ENCODE measurements at regions of chr16 and their contacts with region 1.

Region 1: GRCh38 chr16:81932668-81933067 is 78.6 kb downstream of the SDR42E1 start:
- DNase-seq: no peak
- ATAC-seq: no peak
- H3K4me3 ChIP-seq: no peak overlapping the region
- H3K27ac ChIP-seq: no peak overlapping the region
- H3K4me1 ChIP-seq: peaks cover 5 to 10% of the 10 kb centered on the region in 2 experiments; a peak in 3 of 5 replicates
- H3K27me3 ChIP-seq: peaks cover 15 to 32% of the 10 kb centered on the region in 2 experiments; a peak in 4 of 5 replicates
- CTCF ChIP-seq: 0 out of 6 replicates have a peak, but pooled peaks of 1 of the 3 experiments have one; percentile 17
- EP300 ChIP-seq: no peak
- POLR2A ChIP-seq: no peak
- RAD21 ChIP-seq: no peak

Region 2: DNA sequence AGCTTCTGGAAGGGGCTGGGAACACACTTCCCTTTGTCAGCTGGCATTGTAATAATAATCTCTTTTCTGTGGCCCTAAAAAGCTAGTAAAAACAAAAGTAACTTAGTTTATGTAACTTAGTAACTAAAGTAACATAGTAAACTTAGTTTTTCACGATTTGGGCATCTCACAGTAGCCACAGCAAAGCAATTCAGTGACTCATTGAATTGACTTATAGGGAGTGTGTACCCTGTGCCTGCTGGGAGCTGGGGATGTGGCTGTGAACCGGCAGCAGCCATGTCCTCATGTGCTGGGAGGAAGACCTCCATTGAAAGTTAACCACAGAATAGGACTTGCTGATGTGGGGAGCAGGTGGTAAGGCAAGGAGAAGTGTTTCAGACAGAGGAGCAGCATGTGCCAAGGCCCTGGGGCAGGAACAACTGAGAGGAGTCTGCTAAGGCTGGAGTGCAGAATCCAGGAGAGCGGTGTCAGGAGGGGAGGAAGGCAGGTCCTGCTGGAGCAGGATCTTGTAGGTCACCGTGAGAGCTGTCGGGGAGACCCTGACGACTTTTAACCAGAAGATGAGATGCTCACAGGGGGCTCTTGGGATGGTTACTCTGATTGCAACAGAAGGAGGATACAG is 40.8 kb before region 1 on chr16:
- CTCF ChIA-PET with region 1: no interaction called
- POLR2A ChIA-PET with region 1: interaction called, 4 read pairs
- in situ Hi-C with region 1: no loop called
- intact Hi-C with region 1: loop called (anchors 5 kb)
- DNase-seq: no peak
- ATAC-seq: no peak
- H3K4me3 ChIP-seq: no peak overlapping the region
- H3K27ac ChIP-seq: no peak overlapping the region
- H3K4me1 ChIP-seq: peaks cover 6 to 11% of the 10 kb centered on the region in 2 experiments
- H3K27me3 ChIP-seq: peaks cover 20 to 50% of the 10 kb centered on the region in 2 experiments
- CTCF ChIP-seq: no peak
- EP300 ChIP-seq: no peak
- POLR2A ChIP-seq: no peak
- RAD21 ChIP-seq: no peak

Measured in K562 (cell line).